ENCODE measurements at regions of chr1 and their contacts with region 1.

Region 1: DNA sequence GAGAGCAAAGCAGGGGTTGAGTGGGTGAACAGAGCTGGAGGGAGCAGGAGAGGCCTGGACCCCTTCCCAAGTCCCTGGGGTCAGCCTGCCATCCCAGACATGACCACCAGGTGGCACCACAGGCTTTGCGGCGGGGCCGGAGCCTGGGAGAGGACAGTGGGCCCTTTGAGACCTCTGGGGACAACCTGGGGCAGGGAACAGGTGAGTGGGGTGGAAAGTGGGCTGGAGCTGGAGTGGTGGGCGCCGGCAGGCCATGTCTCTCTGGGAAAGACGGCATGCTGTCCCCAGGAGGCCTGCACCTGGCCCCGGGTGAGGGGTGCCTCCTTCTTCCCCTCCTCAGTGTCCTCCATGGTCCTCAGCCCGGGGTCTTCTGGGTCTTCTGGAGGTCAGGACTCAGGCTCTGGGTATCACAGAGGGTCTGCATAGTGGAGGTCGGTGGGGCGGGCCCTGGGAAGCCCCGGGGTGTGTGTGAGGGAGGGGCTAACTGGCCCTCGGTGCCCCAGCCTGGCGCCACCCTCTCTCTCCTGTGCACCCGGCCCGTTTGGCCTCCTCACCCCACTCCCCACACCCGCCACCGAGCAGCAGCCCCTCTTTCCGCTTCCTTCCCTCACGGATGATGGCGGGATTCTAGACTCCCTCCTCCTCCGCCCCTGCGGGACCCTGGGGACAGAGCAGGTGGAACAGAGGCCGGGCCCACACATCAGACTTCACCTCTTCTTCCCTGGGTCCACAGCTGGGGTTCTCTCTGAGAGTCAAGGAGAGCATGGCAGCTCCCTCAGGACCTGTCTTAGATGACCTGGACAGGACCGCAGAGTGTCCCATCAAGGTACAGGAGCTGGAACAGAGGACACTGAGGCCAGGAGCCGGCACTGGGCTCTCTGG is 28.4 kb upstream of the PKP1 start:
- DNase-seq: peak in 3 of 4 donors; percentile 46 to 92 (median 67)
- ATAC-seq: peak; percentile 90
- H3K4me3 ChIP-seq: no peak overlapping the region
- H3K27ac ChIP-seq: no peak overlapping the region
- H3K4me1 ChIP-seq: peaks cover 4 to 6% of the 10 kb centered on the region in 2 donors
- H3K27me3 ChIP-seq: peaks cover 0 to 11% of the 10 kb centered on the region in 2 donors
- CTCF ChIP-seq: peak; percentile 97 to 98

Region 2: DNA sequence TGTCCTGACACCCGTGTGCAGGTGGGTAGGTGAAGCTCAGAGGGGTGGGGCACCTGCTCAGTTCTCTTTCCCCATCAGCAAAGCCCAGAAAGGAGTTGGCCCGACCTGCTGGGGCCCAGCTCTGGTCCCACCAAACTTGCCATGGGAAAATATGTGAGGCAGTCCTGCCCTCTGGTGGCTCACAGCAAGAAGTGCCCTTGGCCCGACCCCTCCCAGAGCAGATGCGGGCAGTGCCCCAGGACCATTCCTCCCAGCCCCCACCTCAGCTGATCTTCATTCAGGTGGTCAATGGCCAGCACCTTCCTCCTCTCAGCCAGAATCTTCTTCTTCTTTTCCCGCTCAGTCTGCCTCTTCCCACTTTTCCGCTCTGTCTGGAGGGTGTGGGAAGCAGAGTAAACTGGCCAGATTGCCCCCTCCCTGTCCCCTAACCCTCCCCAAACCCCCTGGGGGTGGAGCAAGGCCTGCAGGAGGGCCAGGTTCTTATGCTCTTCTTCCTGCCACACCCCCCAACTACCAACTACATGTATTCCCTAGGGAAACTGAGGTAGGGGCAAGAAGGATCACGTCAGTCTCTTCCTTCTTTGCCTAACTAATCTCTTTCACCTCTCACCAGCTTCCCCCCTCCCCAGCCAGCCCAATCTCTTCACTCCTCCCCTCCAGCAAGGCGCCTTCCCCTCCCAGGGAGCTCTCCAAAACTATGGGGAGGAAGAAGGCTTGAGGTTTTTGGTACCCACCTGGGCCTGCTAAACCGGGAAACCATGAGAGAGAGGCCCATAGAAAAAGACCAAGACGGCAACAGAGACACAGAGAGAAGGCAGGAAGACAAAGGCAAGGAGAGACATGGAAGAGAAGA is 107.0 kb after region 1 on chr1:
- intact Hi-C with region 1: loop called (anchors 5 to 10 kb)
- DNase-seq: peak in 2 of 4 donors; percentile 53 to 68
- ATAC-seq: peak; percentile 86
- H3K4me3 ChIP-seq: no peak overlapping the region
- H3K27ac ChIP-seq: no peak overlapping the region
- H3K4me1 ChIP-seq: no peaks in the 10 kb centered on the region
- H3K27me3 ChIP-seq: no peaks in the 10 kb centered on the region
- CTCF ChIP-seq: peak; percentile 72 to 78

Measured in left lung (tissue), 14 donors.